Mammary epithelial cell (primary cell): ENCODE measurements at regions of chr5 and their contacts with region 1.

Region 1: GRCh38 chr5:146151970-146152369 is 30.5 kb downstream of the LARS1 start:
- DNase-seq: no peak
- H3K4me3 ChIP-seq: no peak overlapping the region
- H3K27ac ChIP-seq: no peak overlapping the region
- H3K4me1 ChIP-seq: no peaks in the 10 kb centered on the region
- H3K27me3 ChIP-seq: no peaks in the 10 kb centered on the region
- CTCF ChIP-seq: no peak

Region 2: GRCh38 chr5:145965804-145966203 is 186.2 kb before region 1 on chr5:
- CTCF ChIA-PET with region 1: no interaction called
- dilution Hi-C with region 1: no loop called
- in situ Hi-C with region 1: no loop called
- intact Hi-C with region 1: no loop called
- DNase-seq: no peak
- H3K4me3 ChIP-seq: no peak overlapping the region
- H3K27ac ChIP-seq: no peak overlapping the region
- H3K4me1 ChIP-seq: peaks cover 25% of the 10 kb centered on the region
- H3K27me3 ChIP-seq: no peaks in the 10 kb centered on the region
- CTCF ChIP-seq: no peak

Region 3: DNA sequence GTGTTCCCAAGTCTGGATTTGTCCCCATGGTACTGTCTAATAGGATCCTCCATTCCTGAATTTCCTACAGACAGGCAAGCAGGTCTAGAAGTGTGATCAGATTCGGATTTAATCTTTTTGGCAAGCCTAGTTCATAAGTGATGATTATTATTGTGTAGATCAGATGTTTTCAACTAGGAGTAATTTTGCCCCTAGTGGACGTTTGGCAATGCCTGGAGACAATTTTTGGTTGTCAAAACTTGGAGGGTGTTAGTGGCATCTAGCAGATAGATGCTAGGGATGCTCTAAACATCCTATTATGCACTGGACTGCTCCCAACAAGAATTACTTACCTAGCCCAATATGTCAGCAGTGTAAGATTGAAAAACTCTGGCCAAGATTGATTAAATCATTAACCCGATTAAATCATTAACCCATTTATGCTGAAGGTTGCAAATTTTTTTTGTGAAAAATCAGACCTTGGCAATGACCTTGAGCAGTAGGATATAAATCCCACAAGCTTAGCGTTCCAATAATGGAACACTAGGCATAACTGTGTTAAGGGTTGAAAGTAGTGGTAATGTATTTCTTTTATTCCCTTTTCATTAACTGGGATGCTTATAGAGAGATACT is 323.3 kb after region 1 on chr5:
- CTCF ChIA-PET with region 1: no interaction called
- dilution Hi-C with region 1: no loop called
- in situ Hi-C with region 1: loop called in 1 of 2 experiments (anchors 25 kb)
- intact Hi-C with region 1: loop called (anchors 10 kb)
- DNase-seq: no peak
- H3K4me3 ChIP-seq: no peak overlapping the region
- H3K27ac ChIP-seq: no peak overlapping the region
- H3K4me1 ChIP-seq: no peaks in the 10 kb centered on the region
- H3K27me3 ChIP-seq: no peaks in the 10 kb centered on the region
- CTCF ChIP-seq: peak; percentile 25 to 56